HEK293 (cell line): ENCODE measurements at regions of chr12 and their contacts with region 1.

Region 1: DNA sequence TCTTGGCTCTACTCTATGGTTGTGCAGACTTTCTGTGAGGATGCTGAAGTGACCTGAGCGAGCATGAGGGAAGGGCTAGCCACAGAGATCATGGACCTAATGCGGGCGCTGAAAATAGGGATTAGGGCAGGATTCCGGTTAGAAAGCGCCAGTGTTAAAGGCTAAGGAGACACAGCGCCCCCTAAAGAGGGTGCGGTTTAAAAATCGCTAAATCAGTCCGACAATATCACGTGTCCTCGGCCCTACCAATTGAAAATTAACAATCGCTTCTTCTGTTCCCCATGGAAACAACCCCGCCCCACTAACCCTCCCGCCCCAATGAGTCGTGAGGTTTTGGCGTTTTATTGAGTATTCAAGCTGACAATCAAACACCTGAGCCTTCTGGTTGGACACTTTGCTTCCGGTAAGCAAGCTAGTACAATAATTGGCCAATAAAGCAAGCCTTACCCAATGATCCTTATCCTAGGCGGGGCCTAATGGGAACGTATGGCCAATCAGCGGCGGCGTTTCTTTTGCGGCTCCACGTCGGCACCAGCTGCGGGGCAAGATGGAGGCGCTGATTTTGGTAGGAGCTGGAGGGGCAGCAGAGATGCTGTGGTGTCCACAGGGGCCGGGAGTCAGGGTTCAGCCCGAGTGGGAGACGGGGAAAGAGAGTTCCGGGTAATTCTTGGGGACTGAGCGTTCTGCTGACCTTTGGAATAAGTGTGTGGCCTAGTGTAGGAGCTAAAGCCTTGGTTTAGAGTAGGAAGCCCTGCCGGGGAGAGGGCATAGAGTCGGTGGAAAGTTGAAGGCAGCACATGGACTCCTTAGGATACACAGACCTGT is at the start of gene COPZ1:
- H3K4me3 ChIP-seq: peak within 1 kb of the TSS; percentile 88
- H3K27ac ChIP-seq: peak within 1 kb of the TSS; percentile 70
- H3K4me1 ChIP-seq: no peaks in the 10 kb centered on the region; the same call in 1 of the 2 replicates
- CTCF ChIP-seq: peak; percentile 84

Region 2: DNA sequence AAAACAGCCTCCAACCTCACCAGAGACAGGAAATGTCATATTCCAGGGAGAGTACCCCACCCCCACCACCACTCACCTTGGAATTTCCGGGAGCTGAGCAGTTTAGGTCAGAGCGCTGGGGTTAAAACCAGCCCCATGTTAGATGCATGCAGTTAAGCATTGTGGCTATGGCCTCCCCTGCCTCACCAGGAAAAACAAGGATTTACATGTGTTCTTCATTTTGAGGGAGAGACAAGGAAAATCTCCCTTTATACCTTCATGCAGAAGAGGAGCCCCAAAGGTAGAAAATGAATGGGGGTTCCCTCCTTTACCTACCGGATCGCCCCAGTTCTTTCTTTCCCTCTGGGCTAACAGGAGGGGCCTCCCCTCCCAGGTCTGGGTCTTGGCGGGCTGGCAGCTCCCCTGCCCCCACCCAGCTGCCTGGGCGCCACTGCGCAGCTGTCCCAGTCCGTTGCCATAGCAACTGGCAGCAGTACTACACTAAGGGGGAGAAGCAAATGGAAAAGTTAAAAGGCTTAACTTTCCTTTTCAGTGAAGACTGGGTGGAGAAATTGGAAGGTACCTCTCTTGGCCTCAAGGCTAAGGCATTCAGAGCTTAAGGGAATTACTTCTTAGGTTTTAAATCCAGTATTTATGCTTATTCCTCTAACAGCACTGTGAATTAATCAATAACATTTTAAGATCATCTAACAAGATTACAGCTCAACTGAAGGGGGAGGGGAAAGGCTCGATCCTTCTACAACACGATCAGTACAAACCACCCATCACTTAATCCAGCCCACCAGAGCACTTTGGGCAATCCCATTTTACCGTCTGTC is 65.4 kb before region 1 on chr12:
- CTCF ChIA-PET with region 1: interaction called, 10 read pairs
- POLR2A ChIA-PET with region 1: interaction called, 13 read pairs
- H3K4me3 ChIP-seq: peak overlapping the region; percentile 45
- H3K27ac ChIP-seq: peak overlapping the region; percentile 66
- H3K4me1 ChIP-seq: peaks cover 31% of the 10 kb centered on the region
- CTCF ChIP-seq: no peak

Region 3: GRCh38 chr12:54300732-54301427 is 23.9 kb before region 1 on chr12 and contains the start of gene NFE2:
- CTCF ChIA-PET with region 1: interaction called, 31 read pairs
- POLR2A ChIA-PET with region 1: interaction called, 17 read pairs
- H3K4me3 ChIP-seq: peak within 1 kb of the TSS; percentile 25
- H3K27ac ChIP-seq: no peak within 1 kb of the TSS; the same call in 1 of the 2 replicates
- H3K4me1 ChIP-seq: peaks cover 6% of the 10 kb centered on the region
- CTCF ChIP-seq: peak; percentile 45; the same call in 1 of the 2 replicates

Region 4: GRCh38 chr12:54337280-54337842 is 12.5 kb after region 1 on chr12:
- CTCF ChIA-PET with region 1: interaction called, 69 read pairs
- POLR2A ChIA-PET with region 1: interaction called, 5 read pairs
- H3K4me3 ChIP-seq: no peak overlapping the region
- H3K27ac ChIP-seq: no peak overlapping the region
- H3K4me1 ChIP-seq: peaks cover 6% of the 10 kb centered on the region; the same call in 1 of the 2 replicates
- CTCF ChIP-seq: peak; percentile 33; the same call in 1 of the 2 replicates

Region 5: DNA sequence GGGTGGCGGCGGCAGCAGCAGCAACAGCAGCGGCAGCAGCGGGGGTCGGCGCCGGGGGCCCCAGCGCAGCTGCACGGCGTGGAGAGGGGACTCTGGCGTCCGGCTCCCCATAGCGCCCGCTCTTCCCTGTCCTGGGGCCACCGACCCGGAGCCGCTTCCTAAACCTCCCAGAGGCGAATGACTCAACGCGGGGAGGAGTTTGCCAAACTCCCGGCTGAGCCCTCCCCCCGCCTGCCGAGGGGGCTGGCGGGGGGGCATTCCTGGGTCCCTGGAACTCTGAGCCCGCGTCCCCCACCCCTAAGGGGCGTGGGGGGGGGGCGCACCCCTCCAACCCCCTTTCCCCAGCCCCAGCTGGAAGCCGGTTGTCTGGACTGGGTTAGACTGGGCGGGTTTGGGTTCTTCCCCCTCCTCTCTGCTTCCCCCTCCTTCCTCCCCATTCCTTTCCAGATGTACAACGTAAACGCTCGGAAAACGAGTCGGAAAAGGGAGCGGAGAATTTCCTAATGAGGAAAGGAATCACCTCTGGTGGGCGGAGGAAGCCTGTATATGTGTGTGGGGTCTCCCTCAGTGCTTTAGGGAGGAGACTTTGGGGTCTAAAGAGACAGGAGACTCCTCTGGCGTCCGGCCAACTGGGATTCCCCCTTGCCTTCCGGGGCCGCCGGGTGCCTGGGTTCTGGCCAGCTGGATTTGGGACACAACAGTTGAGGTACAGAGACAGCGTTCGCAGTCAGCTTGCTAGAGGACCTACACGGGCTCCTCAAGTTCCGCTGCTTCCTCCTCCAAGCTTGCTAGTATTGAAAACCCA is 94.5 kb after region 1 on chr12 and contains the start of gene ITGA5:
- CTCF ChIA-PET with region 1: no interaction called
- POLR2A ChIA-PET with region 1: no interaction called
- H3K4me3 ChIP-seq: peak within 1 kb of the TSS; percentile 74
- H3K27ac ChIP-seq: peak within 1 kb of the TSS; percentile 78; the same call in 1 of the 2 replicates
- H3K4me1 ChIP-seq: peaks cover 11% of the 10 kb centered on the region
- CTCF ChIP-seq: no peak